Endothelial cell of umbilical vein (primary cell): ENCODE measurements at regions of chr5 and their contacts with region 1.

Region 1: GRCh38 chr5:12805165-12805707 is 901.0 kb upstream of the CTNND2 start:
- DNase-seq: no peak
- H3K4me3 ChIP-seq: no peak overlapping the region
- H3K27ac ChIP-seq: no peak overlapping the region
- H3K4me1 ChIP-seq: no peaks in the 10 kb centered on the region
- H3K27me3 ChIP-seq: no peaks in the 10 kb centered on the region
- CTCF ChIP-seq: no peak
- POLR2A ChIP-seq: no peak

Region 2: DNA sequence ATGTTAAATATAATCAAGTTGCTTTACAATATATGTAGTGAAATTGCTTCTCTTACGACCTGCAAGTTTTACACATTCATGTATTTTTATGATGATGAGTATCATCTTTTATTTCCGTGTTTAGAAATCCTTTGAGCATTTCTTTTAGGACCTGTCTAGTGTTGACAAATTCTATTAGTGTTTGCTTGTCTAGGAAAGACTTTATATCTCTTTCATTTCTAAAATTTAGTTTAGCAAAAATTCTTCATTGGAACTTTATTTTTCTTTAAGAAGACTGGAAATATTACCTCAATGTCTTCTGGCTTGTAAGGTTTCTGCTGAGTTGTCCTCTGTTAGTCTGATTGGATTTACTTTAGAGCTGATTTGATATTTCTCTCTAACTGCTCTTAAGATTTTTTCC is 19.9 kb after region 1 on chr5:
- CTCF ChIA-PET with region 1: no interaction called
- POLR2A ChIA-PET with region 1: no interaction called
- dilution Hi-C with region 1: no loop called
- intact Hi-C with region 1: loop called (anchors 1 kb)
- DNase-seq: no peak
- H3K4me3 ChIP-seq: no peak overlapping the region
- H3K27ac ChIP-seq: no peak overlapping the region
- H3K4me1 ChIP-seq: no peaks in the 10 kb centered on the region
- H3K27me3 ChIP-seq: no peaks in the 10 kb centered on the region
- CTCF ChIP-seq: no peak
- POLR2A ChIP-seq: no peak

Region 3: DNA sequence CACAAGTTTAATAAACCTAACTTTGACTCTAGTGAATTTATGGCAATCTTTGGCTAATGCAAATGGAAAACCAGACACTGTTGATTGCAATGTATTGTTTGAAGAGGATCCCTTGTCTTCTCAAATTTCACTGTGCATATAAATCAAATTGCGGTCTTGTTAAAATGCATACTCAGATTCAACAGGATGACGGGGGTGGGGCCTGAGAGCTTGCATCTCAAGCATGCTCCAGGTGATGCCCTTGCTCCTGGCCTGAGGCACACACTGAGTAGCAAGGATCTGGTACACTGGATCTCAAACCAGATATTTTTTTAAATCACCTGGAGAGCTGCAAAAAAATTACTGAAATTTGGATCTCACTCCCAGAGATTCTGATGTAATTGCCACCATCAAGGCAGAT is 675.6 kb after region 1 on chr5:
- CTCF ChIA-PET with region 1: no interaction called
- POLR2A ChIA-PET with region 1: no interaction called
- dilution Hi-C with region 1: no loop called
- intact Hi-C with region 1: no loop called
- DNase-seq: no peak
- H3K4me3 ChIP-seq: no peak overlapping the region
- H3K27ac ChIP-seq: no peak overlapping the region
- H3K4me1 ChIP-seq: peaks cover 13% of the 10 kb centered on the region
- H3K27me3 ChIP-seq: peaks cover 1 to 4% of the 10 kb centered on the region in 2 experiments
- CTCF ChIP-seq: no peak
- POLR2A ChIP-seq: no peak